Caco-2 (cell line): ENCODE measurements at regions of chr14 and their contacts with region 1.

Region 1: GRCh38 chr14:49852301-49853157 is at the start of gene NEMF:
- DNase-seq: peak; percentile 86 to 92
- H3K4me3 ChIP-seq: peak within 1 kb of the TSS; percentile 84
- H3K4me3 Mint-ChIP-seq: peak within 1 kb of the TSS; percentile 100
- H3K27ac Mint-ChIP-seq: peak within 1 kb of the TSS; percentile 99
- H3K4me1 ChIP-seq: peaks cover 9% of the 10 kb centered on the region; the same call in 1 of the 2 replicates
- H3K4me1 Mint-ChIP-seq: peaks cover 6% of the 10 kb centered on the region
- H3K27me3 ChIP-seq: no peaks in the 10 kb centered on the region
- H3K27me3 Mint-ChIP-seq: no peaks in the 10 kb centered on the region
- CTCF ChIP-seq: peak; percentile 73 to 85
- total RNA-seq, gene NEMF: 57.4 and 62.7 TPM in 2 replicates

Region 2: DNA sequence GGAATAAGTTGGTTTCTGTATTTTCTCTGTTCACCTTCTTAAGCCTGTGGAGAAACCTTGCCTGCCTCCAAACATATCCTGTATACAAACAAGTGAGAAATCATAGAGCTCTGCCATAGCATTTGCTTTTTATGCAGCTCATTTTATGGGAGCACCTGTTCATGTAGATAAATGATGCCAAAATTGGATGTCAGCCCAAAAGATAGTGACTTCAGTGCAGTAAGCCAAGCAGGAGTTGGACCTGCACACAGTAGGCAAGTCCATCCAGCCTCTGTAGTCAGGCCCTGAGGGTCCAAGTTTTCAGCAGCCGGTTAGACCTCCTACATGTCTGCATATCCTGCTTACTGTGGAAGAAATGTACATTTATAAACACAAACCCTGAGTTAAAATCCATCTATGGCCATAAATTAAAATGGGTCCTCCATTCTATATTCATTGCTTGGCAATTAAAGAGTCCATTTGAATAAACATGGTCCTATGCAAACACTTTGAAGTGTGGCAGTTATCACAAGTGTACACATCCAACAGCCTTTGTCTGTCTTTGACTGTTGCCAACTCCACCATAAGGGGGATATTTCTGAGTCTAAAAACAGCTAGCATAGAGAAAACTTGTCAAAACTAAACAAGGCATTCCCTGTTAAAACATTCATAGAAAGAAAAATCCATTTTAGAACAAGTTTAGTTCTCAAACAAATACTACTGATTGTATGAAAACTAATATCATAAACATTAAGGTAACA is 1114.2 kb before region 1 on chr14:
- CTCF ChIA-PET with region 1: no interaction called
- POLR2A ChIA-PET with region 1: no interaction called
- intact Hi-C with region 1: no loop called
- DNase-seq: no peak
- H3K4me3 ChIP-seq: no peak overlapping the region
- H3K4me3 Mint-ChIP-seq: no peak overlapping the region
- H3K27ac Mint-ChIP-seq: no peak overlapping the region
- H3K4me1 ChIP-seq: no peaks in the 10 kb centered on the region
- H3K4me1 Mint-ChIP-seq: no peaks in the 10 kb centered on the region
- H3K27me3 ChIP-seq: no peaks in the 10 kb centered on the region
- H3K27me3 Mint-ChIP-seq: no peaks in the 10 kb centered on the region
- CTCF ChIP-seq: no peak

Region 3: DNA sequence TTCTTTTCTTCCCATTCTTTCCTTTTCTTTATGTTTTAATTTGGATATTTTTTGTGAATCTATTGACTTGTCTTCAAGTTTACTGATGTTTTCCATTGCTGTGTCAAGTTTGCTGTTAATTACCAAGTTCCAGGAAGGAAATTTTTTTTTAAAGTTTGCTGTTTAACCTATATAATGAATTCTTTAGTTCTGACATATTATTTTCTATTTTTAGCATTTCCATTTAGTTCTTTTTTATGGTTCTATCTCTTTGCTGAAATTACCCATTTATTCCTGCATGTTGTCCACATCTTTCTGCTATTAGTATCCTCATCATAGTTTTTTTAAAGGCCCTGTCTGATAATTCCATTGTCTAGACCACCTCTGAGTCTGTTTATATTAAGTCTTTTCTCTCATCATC is 131.8 kb before region 1 on chr14:
- CTCF ChIA-PET with region 1: no interaction called
- POLR2A ChIA-PET with region 1: no interaction called
- intact Hi-C with region 1: loop called (anchors 5 kb)
- DNase-seq: no peak
- H3K4me3 ChIP-seq: no peak overlapping the region
- H3K4me3 Mint-ChIP-seq: no peak overlapping the region
- H3K27ac Mint-ChIP-seq: no peak overlapping the region
- H3K4me1 ChIP-seq: no peaks in the 10 kb centered on the region
- H3K4me1 Mint-ChIP-seq: peaks cover 11% of the 10 kb centered on the region
- H3K27me3 ChIP-seq: no peaks in the 10 kb centered on the region
- H3K27me3 Mint-ChIP-seq: no peaks in the 10 kb centered on the region
- CTCF ChIP-seq: no peak

Region 4: DNA sequence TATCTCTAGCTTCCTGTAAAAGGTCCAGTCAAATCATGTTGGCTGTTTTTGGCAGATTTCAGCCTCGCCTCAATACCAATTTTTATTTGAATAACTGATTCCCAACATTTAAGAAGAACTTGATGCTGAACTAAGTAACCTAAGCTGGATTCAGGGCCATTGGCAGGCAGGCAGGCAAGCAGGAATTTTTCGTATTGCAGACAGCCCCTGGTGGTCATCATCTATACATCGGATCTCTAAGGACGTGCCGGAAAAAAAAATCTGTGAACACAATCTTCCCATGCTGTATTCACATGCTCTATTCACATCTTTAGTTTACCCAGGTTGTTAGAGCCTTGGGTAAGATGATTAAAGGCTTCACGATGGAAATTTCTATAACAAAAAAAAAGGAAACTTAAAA is 256.8 kb after region 1 on chr14:
- CTCF ChIA-PET with region 1: interaction called, 3 read pairs
- POLR2A ChIA-PET with region 1: no interaction called
- intact Hi-C with region 1: loop called (anchors 1 kb)
- DNase-seq: peak in 1 of 2 experiments; percentile 40
- H3K4me3 ChIP-seq: no peak overlapping the region
- H3K4me3 Mint-ChIP-seq: no peak overlapping the region
- H3K27ac Mint-ChIP-seq: no peak overlapping the region
- H3K4me1 ChIP-seq: peaks cover 3% of the 10 kb centered on the region; the same call in 1 of the 2 replicates
- H3K4me1 Mint-ChIP-seq: no peaks in the 10 kb centered on the region
- H3K27me3 ChIP-seq: no peaks in the 10 kb centered on the region
- H3K27me3 Mint-ChIP-seq: no peaks in the 10 kb centered on the region
- CTCF ChIP-seq: peak; percentile 50 to 57

Region 5: DNA sequence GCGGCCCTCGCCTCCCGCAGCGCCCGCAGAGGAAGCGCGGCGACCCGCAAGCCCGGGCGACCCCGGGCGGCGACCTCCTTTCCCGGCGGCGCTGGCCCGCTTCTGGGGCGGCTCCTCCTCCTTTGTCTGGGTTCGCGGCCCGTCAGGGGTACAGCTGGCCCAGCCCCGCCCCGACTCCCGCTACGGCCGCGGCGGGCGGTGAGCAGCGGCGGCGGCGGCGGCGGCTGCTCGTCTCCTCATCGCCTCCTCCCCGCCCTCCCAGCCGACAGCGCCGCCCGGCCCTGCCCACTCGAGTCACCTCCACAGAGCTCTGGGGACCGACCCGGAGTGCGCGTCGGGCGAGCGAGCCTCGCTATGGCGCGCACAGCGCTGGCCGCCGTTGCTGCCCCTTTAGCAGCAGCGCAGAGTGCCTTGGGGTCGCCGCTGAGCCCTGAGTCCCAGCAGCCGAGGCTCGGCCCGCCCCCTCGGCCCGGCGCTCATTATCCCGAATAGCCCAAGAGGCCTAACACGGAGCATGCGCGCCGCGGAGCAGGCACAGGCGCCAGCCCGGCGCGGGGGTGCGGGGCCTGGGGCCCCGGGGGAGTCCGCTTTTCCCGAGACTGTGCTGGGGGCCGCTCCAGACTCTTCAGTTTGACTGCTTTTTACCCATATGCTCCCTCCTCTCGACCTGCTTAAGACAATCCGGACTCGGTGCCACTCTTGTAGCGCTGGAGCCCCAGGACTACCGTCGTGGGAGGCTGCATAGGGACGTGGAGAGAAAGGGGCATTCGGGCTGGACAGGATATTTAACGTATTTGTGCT is 379.1 kb after region 1 on chr14 and contains the start of gene SOS2:
- CTCF ChIA-PET with region 1: no interaction called
- POLR2A ChIA-PET with region 1: no interaction called
- intact Hi-C with region 1: loop called (anchors 10 kb)
- DNase-seq: peak; percentile 87 to 89
- H3K4me3 ChIP-seq: peak within 1 kb of the TSS; percentile 76
- H3K4me3 Mint-ChIP-seq: peak within 1 kb of the TSS; percentile 87
- H3K27ac Mint-ChIP-seq: peak within 1 kb of the TSS; percentile 76
- H3K4me1 ChIP-seq: peaks cover 6% of the 10 kb centered on the region; the same call in 1 of the 2 replicates
- H3K4me1 Mint-ChIP-seq: no peaks in the 10 kb centered on the region
- H3K27me3 ChIP-seq: no peaks in the 10 kb centered on the region
- H3K27me3 Mint-ChIP-seq: no peaks in the 10 kb centered on the region
- CTCF ChIP-seq: no peak
- total RNA-seq, gene SOS2: 13.0 and 13.9 TPM in 2 replicates